Calu3 (cell line): ENCODE measurements at regions of chr6 and their contacts with region 1.

Region 1: GRCh38 chr6:108989700-108990099 is 104.9 kb downstream of the SESN1 start:
- DNase-seq: peak; percentile 57
- H3K4me3 Mint-ChIP-seq: peak overlapping the region; percentile 61
- H3K27ac Mint-ChIP-seq: peak overlapping the region; percentile 46
- H3K4me1 Mint-ChIP-seq: peaks cover 24% of the 10 kb centered on the region
- H3K27me3 Mint-ChIP-seq: no peaks in the 10 kb centered on the region
- CTCF ChIP-seq: no peak

Region 2: GRCh38 chr6:108944707-108945680 is 44.7 kb before region 1 on chr6:
- CTCF ChIA-PET with region 1: no interaction called
- intact Hi-C with region 1: loop called (anchors 5 kb)
- DNase-seq: no peak
- H3K4me3 Mint-ChIP-seq: no peak overlapping the region
- H3K27ac Mint-ChIP-seq: no peak overlapping the region
- H3K4me1 Mint-ChIP-seq: peaks cover 10% of the 10 kb centered on the region
- H3K27me3 Mint-ChIP-seq: no peaks in the 10 kb centered on the region
- CTCF ChIP-seq: no peak

Region 3: GRCh38 chr6:109024784-109025183 is 35.1 kb after region 1 on chr6:
- CTCF ChIA-PET with region 1: no interaction called
- intact Hi-C with region 1: no loop called
- DNase-seq: no peak
- H3K4me3 Mint-ChIP-seq: no peak overlapping the region
- H3K27ac Mint-ChIP-seq: no peak overlapping the region
- H3K4me1 Mint-ChIP-seq: no peaks in the 10 kb centered on the region
- H3K27me3 Mint-ChIP-seq: no peaks in the 10 kb centered on the region
- CTCF ChIP-seq: no peak

Region 4: DNA sequence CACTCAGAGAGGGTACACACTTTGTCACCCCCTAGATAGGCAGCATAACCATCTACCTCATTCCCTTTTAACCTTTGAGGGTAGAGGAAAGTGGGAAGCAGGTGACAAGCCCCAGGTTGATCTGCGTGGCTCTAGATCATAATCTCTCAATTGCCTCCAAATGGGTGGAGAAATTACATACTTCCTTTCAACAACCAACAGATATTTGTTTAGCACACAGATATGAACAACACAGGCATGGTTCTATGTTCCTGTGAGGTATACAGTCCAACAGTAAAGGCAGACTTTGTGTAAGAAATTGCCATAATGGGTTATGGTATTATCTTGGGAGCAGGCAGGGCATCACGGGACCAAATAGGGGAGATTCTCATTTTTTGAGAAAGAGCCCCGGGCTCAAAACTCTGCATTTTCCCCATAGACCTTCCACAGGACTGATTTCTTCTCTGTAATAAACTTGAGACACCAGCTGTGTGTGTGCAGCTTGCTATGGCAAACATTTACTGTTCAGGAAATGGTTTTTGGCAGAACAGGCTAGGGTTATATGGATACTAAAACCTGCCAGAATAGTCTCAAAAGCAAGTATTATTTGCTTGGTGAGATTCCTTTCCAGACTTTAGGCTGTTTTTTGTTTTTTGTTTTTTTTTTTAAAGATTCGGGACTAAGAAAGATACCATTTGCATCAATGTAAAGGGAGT is 266.4 kb after region 1 on chr6:
- CTCF ChIA-PET with region 1: no interaction called
- intact Hi-C with region 1: no loop called
- DNase-seq: no peak
- H3K4me3 Mint-ChIP-seq: no peak overlapping the region
- H3K27ac Mint-ChIP-seq: no peak overlapping the region
- H3K4me1 Mint-ChIP-seq: peaks cover 17% of the 10 kb centered on the region
- H3K27me3 Mint-ChIP-seq: no peaks in the 10 kb centered on the region
- CTCF ChIP-seq: no peak